PC-9 (cell line): ENCODE measurements at regions of chr19 and their contacts with region 1.

Region 1: DNA sequence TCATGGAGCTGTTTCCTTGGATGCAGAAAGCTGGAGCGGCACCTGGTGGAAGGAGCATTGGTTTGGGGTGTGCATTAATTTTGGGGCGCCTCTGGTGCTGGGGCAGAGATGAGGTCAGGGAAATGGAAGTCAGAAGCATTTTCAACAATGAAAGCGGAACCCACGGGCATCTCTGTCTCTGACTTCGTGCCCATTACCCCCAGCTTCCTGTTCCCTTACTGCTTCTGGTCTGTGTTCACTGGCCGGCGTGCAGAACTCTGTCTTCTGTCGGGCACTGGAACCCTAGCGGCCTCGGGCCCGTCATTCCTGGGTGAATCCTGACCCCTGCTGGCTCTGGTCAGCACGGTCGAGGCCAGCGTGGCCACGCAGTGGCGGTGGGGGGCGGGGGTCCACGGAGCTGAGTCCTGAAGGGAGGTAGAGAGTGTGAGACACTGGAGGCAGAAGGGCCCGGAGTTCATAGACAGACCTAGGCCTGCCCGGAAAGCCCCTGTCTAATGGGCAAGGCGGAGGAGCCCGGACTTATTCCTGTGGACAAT is 7.9 kb upstream of the LINGO3 start:
- DNase-seq: peak in 1 of 2 experiments; percentile 52
- H3K4me3 ChIP-seq: no peak overlapping the region
- H3K27ac ChIP-seq: no peak overlapping the region
- H3K4me1 ChIP-seq: no peaks in the 10 kb centered on the region
- H3K27me3 ChIP-seq: no peaks in the 10 kb centered on the region
- CTCF ChIP-seq: peak; percentile 62

Region 2: DNA sequence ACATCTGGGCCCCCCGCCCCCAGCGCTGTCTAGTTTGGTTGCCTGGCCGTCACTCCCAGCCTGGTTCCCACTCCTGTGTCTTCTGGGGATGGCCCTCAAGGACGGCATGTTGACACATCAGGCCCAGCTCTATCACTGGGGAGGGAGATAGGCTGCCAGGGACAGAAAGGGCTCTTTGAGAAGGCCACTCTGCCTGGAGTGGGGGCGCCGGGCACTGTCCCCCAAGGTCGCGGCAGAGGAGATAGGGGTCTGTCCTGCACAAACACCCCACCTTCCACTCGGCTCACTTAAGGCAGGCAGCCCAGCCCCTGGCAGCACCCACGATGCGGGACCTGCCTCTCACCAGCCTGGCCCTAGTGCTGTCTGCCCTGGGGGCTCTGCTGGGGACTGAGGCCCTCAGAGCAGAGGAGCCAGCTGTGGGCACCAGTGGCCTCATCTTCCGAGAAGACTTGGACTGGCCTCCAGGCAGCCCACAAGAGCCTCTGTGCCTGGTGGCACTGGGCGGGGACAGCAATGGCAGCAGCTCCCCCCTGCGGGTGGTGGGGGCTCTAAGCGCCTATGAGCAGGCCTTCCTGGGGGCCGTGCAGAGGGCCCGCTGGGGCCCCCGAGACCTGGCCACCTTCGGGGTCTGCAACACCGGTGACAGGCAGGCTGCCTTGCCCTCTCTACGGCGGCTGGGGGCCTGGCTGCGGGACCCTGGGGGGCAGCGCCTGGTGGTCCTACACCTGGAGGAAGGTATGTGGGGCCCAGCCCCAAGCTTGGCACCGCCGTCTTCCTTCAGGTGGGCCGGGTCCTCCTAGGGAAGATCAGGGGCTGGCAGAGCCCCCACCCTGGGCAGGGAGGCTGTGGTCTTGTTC is 66.6 kb before region 1 on chr19 and contains the start of gene AMH:
- CTCF ChIA-PET with region 1: interaction called, 16 read pairs
- POLR2A ChIA-PET with region 1: no interaction called
- intact Hi-C with region 1: no loop called
- DNase-seq: no peak
- H3K4me3 ChIP-seq: no peak within 1 kb of the TSS
- H3K27ac ChIP-seq: no peak within 1 kb of the TSS
- H3K4me1 ChIP-seq: no peaks in the 10 kb centered on the region
- H3K27me3 ChIP-seq: no peaks in the 10 kb centered on the region
- CTCF ChIP-seq: no peak
- total RNA-seq, gene AMH: 6.9 and 8.1 TPM in 2 replicates

Region 3: DNA sequence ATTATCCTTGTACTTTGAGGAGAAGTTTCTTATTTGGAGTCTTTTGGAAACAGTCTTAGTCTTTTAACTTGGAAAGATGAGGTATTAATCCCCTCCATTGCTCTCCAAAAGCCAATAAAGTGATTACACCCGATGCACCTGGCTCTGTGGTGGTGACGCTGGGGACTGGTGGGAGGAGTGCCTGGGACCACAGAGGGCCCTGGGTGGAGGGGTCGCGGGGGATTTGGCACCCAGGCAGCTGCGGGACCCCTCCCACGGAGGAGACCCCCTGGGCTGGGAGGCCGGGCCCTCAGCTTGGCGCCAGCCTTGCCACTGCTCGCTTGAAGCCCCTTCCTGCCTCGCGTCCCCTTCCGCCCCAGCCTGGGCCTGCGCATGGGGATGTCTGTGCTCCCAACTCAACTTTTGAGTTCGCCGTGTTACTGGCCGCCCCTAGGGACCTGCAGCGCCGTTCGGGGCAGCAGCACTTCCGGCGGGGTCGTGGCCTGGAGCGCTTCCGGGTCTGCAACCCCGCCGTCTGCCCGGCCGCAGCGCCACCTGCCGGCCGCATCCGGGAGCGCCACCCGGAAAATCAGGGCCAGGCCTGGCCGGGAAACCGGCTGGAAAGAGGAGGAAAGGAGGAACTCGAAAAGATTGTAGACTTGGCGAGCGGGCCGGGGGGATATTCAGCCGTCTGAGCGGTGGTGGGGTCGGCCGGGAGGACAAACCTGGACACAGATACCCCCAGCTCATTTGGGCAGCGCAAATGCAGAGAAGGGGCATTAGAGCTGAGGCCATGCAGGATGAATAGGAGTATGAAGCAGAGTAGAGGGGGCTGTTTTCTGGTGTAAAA is 42.3 kb before region 1 on chr19:
- CTCF ChIA-PET with region 1: interaction called, 17 read pairs
- POLR2A ChIA-PET with region 1: interaction called, 4 read pairs
- intact Hi-C with region 1: no loop called
- DNase-seq: peak; percentile 49 to 66
- H3K4me3 ChIP-seq: peak overlapping the region; percentile 50; the same call in 1 of the 2 replicates
- H3K27ac ChIP-seq: 0 out of 2 replicates have a peak overlapping the region, but pooled peaks have one; percentile 34
- H3K4me1 ChIP-seq: peaks cover 15% of the 10 kb centered on the region; the same call in 1 of the 2 replicates
- H3K27me3 ChIP-seq: no peaks in the 10 kb centered on the region
- CTCF ChIP-seq: peak; percentile 79

Region 4: DNA sequence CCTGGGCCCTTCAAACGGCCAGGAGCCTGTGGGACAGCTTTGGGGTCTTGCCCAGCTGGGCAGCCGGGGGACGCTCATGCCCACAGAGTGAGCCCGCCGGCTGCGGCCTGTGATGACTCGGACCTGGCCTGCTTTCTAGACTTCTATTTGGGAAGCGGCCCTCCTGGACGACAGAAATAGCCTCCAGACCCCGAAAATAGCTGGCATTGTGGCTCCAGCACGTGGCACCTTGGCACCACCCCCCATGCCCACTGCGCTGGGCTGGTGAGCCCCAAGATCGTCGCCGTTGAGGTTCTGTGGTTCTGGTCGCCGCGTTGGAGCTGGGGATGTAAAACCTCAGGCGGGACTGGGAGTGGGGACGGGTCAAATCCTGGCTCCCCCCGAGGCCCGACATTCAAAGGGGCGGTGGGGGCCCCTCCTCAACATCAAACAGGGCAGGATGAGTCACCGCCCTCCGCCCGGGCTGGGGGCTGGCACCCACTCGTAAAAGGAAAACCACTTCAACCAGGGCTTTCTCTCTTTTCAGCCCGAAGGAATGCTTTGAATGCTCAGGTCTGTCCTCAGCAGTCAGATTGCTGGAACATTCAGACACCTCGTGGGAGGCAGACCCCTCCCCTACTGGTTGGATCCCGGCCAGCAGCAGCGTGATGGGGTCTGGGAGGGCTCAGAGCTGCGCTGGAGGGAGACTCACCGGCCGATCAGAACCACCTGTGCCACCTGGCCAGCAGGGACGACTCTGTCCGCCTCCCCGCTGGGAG is 202.2 kb after region 1 on chr19:
- CTCF ChIA-PET with region 1: no interaction called
- POLR2A ChIA-PET with region 1: no interaction called
- intact Hi-C with region 1: no loop called
- DNase-seq: no peak
- H3K4me3 ChIP-seq: no peak overlapping the region
- H3K27ac ChIP-seq: no peak overlapping the region
- H3K4me1 ChIP-seq: no peaks in the 10 kb centered on the region
- H3K27me3 ChIP-seq: no peaks in the 10 kb centered on the region
- CTCF ChIP-seq: no peak